Left colon (tissue), 2 donors: ENCODE measurements at regions of chr17 and their contacts with region 1.

Region 1: GRCh38 chr17:33927732-33928133 is 327.4 kb upstream of the CCL2 start:
- DNase-seq: no peak
- ATAC-seq: no peak

Region 2: GRCh38 chr17:33892717-33893591 is 34.8 kb before region 1 on chr17:
- intact Hi-C with region 1: no loop called
- DNase-seq: no peak
- ATAC-seq: no peak

Region 3: GRCh38 chr17:33981711-33982601 is 54.2 kb after region 1 on chr17:
- intact Hi-C with region 1: loop called in 1 of 2 experiments (anchors 10 kb)
- DNase-seq: peak; percentile 40 to 51
- ATAC-seq: peak; percentile 94